ENCODE measurements at regions of chr9 and their contacts with region 1.

Region 1: DNA sequence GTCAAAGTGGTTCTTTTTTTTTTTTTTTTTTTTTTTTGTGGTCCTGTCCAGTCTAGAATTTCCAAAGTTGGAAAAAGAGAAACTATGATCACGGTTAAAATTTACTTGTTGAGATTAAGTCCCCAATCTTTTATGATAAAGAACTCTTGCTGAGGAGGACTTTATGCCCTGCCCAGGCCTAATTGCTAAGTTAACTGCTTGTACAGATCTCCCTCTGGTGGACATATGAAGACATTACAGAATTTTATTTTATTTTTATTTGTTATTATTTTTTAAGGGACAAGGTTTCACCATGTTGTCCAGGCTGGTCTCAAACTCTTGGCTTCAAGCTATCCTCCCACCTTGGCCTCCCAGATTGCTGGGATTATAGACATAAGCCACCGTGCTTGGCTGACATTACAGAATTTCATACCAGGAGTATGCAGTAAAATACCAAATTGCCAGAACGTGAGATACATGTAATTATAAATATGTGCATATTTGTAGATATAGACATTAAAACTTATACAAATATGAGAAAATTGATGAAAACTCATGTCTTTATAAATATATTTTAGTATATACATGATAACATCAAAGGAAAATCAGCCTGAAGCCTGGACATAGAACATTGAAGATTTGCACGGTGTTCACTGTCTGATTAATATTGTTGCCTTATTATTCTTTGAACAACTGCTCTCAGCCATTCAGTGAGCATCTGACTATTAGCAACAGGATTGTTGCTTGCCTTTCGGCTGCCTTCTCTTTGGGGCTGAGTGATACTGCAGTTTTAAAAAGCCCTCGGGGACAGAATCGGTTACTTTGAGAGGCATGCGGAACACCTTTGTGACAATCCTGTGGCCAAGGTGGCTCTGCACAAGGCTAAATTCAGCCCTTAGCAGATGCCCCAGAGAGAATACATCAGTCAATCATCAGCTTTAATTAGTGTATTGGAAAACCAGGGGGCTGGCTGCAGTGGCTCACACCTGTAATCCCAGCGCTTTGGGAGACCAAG is 91.0 kb downstream of the RFK start:
- DNase-seq: peak; percentile 48 to 70
- ATAC-seq: peak; percentile 24 to 79; a peak in 3 of 6 replicates
- H3K4me3 ChIP-seq: no peak overlapping the region
- H3K27ac ChIP-seq: 0 out of 6 replicates have a peak overlapping the region, but pooled peaks of 1 of the 2 experiments have one; percentile 62
- H3K4me1 ChIP-seq: no peaks in the 10 kb centered on the region
- CTCF ChIP-seq: peak; percentile 81
- EP300 ChIP-seq: no peak
- POLR2A ChIP-seq: no peak
- RAD21 ChIP-seq: peak; percentile 86 to 88

Region 2: GRCh38 chr9:76292246-76292645 is 11.0 kb before region 1 on chr9:
- CTCF ChIA-PET with region 1: interaction called, 34 read pairs
- POLR2A ChIA-PET with region 1: no interaction called
- DNase-seq: no peak
- ATAC-seq: no peak
- H3K4me3 ChIP-seq: no peak overlapping the region
- H3K27ac ChIP-seq: no peak overlapping the region
- H3K4me1 ChIP-seq: no peaks in the 10 kb centered on the region
- CTCF ChIP-seq: no peak
- EP300 ChIP-seq: no peak
- POLR2A ChIP-seq: no peak
- RAD21 ChIP-seq: no peak

Region 3: DNA sequence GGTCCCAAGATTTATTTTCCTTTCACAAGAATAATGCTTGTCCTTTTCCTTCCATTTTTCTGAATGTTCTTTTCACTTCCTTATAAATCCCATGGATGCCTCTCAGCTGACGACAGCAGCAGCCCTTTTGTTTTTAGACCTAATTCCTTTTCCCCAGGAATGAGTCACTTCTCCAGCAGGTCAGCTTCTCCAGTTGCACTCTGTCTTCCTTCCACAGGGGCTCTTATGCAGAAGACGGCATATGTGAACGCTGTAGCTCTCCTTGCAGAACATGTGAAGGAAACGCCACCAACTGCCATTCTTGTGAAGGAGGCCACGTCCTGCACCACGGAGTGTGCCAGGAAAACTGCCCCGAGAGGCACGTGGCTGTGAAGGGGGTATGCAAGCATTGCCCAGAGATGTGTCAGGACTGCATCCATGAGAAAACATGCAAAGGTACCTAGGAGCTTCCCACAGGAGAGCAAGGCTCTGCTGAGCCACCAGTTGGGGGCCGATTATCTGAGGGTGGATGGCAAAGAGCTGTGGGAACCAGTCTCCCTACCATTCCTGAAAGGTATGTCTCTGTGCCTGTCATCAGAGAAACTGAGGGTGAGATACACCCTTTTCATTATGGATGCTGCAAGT is 18.1 kb after region 1 on chr9:
- CTCF ChIA-PET with region 1: interaction called, 40 read pairs
- POLR2A ChIA-PET with region 1: no interaction called
- DNase-seq: peak; percentile 44 to 64
- ATAC-seq: peak; percentile 86 to 93
- H3K4me3 ChIP-seq: no peak overlapping the region
- H3K27ac ChIP-seq: peak overlapping the region; percentile 44 to 75; a peak in 4 of 6 replicates
- H3K4me1 ChIP-seq: peaks cover 23% of the 10 kb centered on the region
- CTCF ChIP-seq: no peak
- EP300 ChIP-seq: no peak
- POLR2A ChIP-seq: no peak
- RAD21 ChIP-seq: no peak

Region 4: GRCh38 chr9:76369583-76369982 is 66.3 kb after region 1 on chr9:
- CTCF ChIA-PET with region 1: interaction called, 11 read pairs
- POLR2A ChIA-PET with region 1: no interaction called
- DNase-seq: no peak
- ATAC-seq: no peak
- H3K4me3 ChIP-seq: no peak overlapping the region
- H3K27ac ChIP-seq: peak overlapping the region; percentile 80 to 95
- H3K4me1 ChIP-seq: peaks cover 75% of the 10 kb centered on the region
- CTCF ChIP-seq: no peak
- EP300 ChIP-seq: no peak
- POLR2A ChIP-seq: no peak
- RAD21 ChIP-seq: no peak

Measured in A549 (cell line).